Calu3 (cell line): ENCODE measurements at regions of chr11 and their contacts with region 1.

Region 1: DNA sequence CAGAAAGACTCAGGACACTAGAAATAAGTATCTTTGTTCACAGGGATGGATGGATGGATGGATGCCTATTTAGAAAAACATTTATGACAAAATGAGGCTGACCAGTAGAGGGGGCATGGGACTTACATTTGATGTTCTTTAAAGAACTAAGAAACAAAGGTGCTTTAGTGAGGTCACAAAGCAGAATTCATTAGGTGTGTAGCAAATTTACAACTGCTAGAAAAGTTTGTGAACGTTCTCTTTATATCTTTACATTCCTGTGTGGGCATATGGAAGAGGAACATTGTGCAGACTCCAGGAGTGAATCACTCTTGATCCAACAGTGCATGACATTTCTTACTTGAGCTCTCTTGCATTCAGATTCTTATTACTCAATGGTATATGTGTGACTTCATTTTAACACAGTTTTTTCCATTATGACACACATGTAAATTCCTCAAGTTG is 15.8 kb upstream of the SIK2 start:
- DNase-seq: peak; percentile 43
- H3K4me3 Mint-ChIP-seq: no peak overlapping the region
- H3K27ac Mint-ChIP-seq: no peak overlapping the region
- H3K4me1 Mint-ChIP-seq: peaks cover 10% of the 10 kb centered on the region
- H3K27me3 Mint-ChIP-seq: no peaks in the 10 kb centered on the region
- CTCF ChIP-seq: peak; percentile 47

Region 2: GRCh38 chr11:111777094-111778046 is 191.0 kb after region 1 on chr11:
- CTCF ChIA-PET with region 1: interaction called, 6 read pairs
- intact Hi-C with region 1: loop called (anchors 5 kb)
- DNase-seq: peak; percentile 23
- H3K4me3 Mint-ChIP-seq: no peak overlapping the region
- H3K27ac Mint-ChIP-seq: no peak overlapping the region
- H3K4me1 Mint-ChIP-seq: peaks cover 15% of the 10 kb centered on the region
- H3K27me3 Mint-ChIP-seq: no peaks in the 10 kb centered on the region
- CTCF ChIP-seq: peak; percentile 28